Caco-2 (cell line): ENCODE measurements at regions of chr2 and their contacts with region 1.

Region 1: DNA sequence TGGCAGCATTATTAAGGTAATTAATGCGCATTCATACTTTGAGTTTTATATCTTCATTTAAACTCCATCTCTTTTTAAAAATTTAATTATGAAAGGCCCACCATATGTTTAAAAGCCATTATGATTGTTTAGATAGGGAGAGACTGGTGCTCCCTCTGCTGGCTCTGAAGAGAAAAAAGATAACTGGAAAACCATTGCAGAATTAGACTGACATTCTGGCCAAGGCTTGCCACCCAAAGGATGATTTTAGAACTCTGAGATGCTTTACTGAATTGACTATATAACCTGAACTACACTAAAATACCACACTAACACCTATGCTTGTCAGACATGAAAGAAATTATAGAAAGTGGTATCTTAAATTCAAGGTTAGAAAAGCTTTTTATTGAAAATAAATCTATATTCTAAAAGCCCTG is 127.6 kb upstream of the SPOPL start:
- DNase-seq: peak in 1 of 2 experiments; percentile 43
- H3K4me3 ChIP-seq: no peak overlapping the region
- H3K4me3 Mint-ChIP-seq: no peak overlapping the region
- H3K27ac Mint-ChIP-seq: no peak overlapping the region
- H3K4me1 ChIP-seq: no peaks in the 10 kb centered on the region
- H3K4me1 Mint-ChIP-seq: peaks cover 6% of the 10 kb centered on the region
- H3K27me3 ChIP-seq: no peaks in the 10 kb centered on the region
- H3K27me3 Mint-ChIP-seq: no peaks in the 10 kb centered on the region
- CTCF ChIP-seq: peak; percentile 75 to 80

Region 2: GRCh38 chr2:138180692-138181386 is 193.2 kb before region 1 on chr2:
- CTCF ChIA-PET with region 1: no interaction called
- POLR2A ChIA-PET with region 1: no interaction called
- intact Hi-C with region 1: loop called (anchors 1 kb)
- DNase-seq: peak in 1 of 2 experiments; percentile 28
- H3K4me3 ChIP-seq: no peak overlapping the region
- H3K4me3 Mint-ChIP-seq: no peak overlapping the region
- H3K27ac Mint-ChIP-seq: no peak overlapping the region
- H3K4me1 ChIP-seq: peaks cover 6% of the 10 kb centered on the region; the same call in 1 of the 2 replicates
- H3K4me1 Mint-ChIP-seq: peaks cover 21% of the 10 kb centered on the region
- H3K27me3 ChIP-seq: no peaks in the 10 kb centered on the region
- H3K27me3 Mint-ChIP-seq: no peaks in the 10 kb centered on the region
- CTCF ChIP-seq: peak; percentile 21 to 43

Region 3: DNA sequence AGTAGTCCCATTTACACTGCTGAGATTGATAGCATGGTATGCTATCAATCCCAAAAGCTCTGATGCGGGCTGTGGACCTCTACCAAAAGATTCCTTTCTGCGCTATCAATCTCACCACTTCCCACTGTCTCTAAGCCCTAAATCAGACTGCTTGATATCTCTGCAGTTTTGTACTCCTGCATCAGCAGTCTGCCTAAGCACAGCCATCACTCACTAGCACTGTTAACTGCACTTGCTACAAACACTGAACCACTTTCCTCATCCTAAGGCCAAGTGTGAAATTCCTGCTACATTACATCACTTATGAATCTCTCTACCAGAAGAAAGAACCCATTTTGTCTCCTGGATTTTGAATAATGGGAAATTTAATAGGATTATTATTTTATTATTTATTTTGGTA is 172.7 kb before region 1 on chr2:
- CTCF ChIA-PET with region 1: no interaction called
- POLR2A ChIA-PET with region 1: no interaction called
- intact Hi-C with region 1: loop called (anchors 5 kb)
- DNase-seq: no peak
- H3K4me3 ChIP-seq: no peak overlapping the region
- H3K4me3 Mint-ChIP-seq: no peak overlapping the region
- H3K27ac Mint-ChIP-seq: no peak overlapping the region
- H3K4me1 ChIP-seq: no peaks in the 10 kb centered on the region
- H3K4me1 Mint-ChIP-seq: no peaks in the 10 kb centered on the region
- H3K27me3 ChIP-seq: no peaks in the 10 kb centered on the region
- H3K27me3 Mint-ChIP-seq: no peaks in the 10 kb centered on the region
- CTCF ChIP-seq: no peak

Region 4: DNA sequence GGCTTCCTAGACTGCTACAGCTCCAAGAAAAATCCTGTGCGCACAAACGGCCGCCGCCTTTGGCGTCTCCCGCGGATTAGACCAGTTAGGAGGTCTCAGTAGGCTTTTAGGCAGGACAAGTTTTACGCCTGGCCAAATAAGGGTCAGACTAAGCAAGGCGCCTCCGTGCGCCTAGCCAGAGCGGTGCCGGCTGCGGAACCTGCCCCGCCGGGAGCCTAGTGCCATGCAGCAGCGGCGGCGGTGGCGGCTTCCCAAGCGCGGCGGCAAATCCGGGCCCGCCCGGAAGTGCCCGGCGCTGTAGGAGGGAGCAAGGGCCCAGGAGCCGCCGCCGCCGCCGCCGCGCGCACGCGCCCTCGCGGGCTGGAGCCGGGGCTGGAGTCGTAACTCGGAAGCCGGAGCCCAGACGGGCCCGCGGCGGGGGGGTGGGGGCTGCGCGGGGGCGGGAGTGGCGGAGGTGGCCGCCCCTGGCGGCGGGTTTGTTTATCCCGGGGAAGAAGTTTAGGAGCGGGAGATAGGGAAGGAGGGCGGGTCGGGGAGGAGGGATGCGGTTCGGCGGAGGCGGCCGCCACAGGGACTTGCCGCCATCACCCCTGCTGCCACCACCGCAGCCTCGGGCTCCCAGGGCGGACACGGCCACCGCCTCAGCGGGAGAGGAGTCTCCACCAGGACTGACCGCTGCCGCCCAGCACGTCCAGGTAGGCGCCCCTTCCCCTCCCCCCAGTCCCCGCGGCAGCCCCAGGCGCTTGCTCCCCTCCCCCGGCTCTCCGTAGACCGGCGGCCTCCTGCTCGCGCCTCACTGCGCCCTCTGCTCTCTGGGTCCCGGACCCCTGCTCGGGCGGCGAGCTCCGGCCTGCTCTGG is 127.7 kb after region 1 on chr2 and contains the start of gene SPOPL:
- CTCF ChIA-PET with region 1: no interaction called
- POLR2A ChIA-PET with region 1: no interaction called
- intact Hi-C with region 1: loop called (anchors 1 kb)
- DNase-seq: peak; percentile 94 to 97
- H3K4me3 ChIP-seq: peak within 1 kb of the TSS; percentile 89
- H3K4me3 Mint-ChIP-seq: peak within 1 kb of the TSS; percentile 88
- H3K27ac Mint-ChIP-seq: peak within 1 kb of the TSS; percentile 92
- H3K4me1 ChIP-seq: peaks cover 37% of the 10 kb centered on the region
- H3K4me1 Mint-ChIP-seq: peaks cover 14% of the 10 kb centered on the region
- H3K27me3 ChIP-seq: no peaks in the 10 kb centered on the region
- H3K27me3 Mint-ChIP-seq: no peaks in the 10 kb centered on the region
- CTCF ChIP-seq: peak; percentile 10 to 21
- total RNA-seq, gene SPOPL: 31.6 and 32.9 TPM in 2 replicates

Region 5: GRCh38 chr2:138689705-138690104 is 315.7 kb after region 1 on chr2:
- CTCF ChIA-PET with region 1: no interaction called
- POLR2A ChIA-PET with region 1: no interaction called
- intact Hi-C with region 1: no loop called
- DNase-seq: no peak
- H3K4me3 ChIP-seq: no peak overlapping the region
- H3K4me3 Mint-ChIP-seq: no peak overlapping the region
- H3K27ac Mint-ChIP-seq: no peak overlapping the region
- H3K4me1 ChIP-seq: peaks cover 5% of the 10 kb centered on the region; the same call in 1 of the 2 replicates
- H3K4me1 Mint-ChIP-seq: no peaks in the 10 kb centered on the region
- H3K27me3 ChIP-seq: no peaks in the 10 kb centered on the region
- H3K27me3 Mint-ChIP-seq: no peaks in the 10 kb centered on the region
- CTCF ChIP-seq: no peak

Region 6: GRCh38 chr2:138716183-138716582 is 342.2 kb after region 1 on chr2:
- CTCF ChIA-PET with region 1: no interaction called
- POLR2A ChIA-PET with region 1: no interaction called
- intact Hi-C with region 1: loop called (anchors 5 kb)
- DNase-seq: no peak
- H3K4me3 ChIP-seq: no peak overlapping the region
- H3K4me3 Mint-ChIP-seq: no peak overlapping the region
- H3K27ac Mint-ChIP-seq: no peak overlapping the region
- H3K4me1 ChIP-seq: peaks cover 27% of the 10 kb centered on the region
- H3K4me1 Mint-ChIP-seq: peaks cover 32% of the 10 kb centered on the region
- H3K27me3 ChIP-seq: no peaks in the 10 kb centered on the region
- H3K27me3 Mint-ChIP-seq: no peaks in the 10 kb centered on the region
- CTCF ChIP-seq: no peak